Panc1 (cell line): ENCODE measurements at regions of chr3 and their contacts with region 1.

Region 1: GRCh38 chr3:57755668-57756527 is at the start of gene SLMAP:
- DNase-seq: peak; percentile 85
- ATAC-seq: peak; percentile 95
- H3K4me3 ChIP-seq: peak within 1 kb of the TSS; percentile 73 to 77
- H3K27ac ChIP-seq: peak within 1 kb of the TSS; percentile 95
- H3K4me1 ChIP-seq: peaks cover 14% of the 10 kb centered on the region
- H3K27me3 ChIP-seq: no peaks in the 10 kb centered on the region
- CTCF ChIP-seq: no peak
- total RNA-seq, gene SLMAP: 49.2 TPM

Region 2: GRCh38 chr3:57709559-57709958 is 46.3 kb before region 1 on chr3:
- CTCF ChIA-PET with region 1: no interaction called
- POLR2A ChIA-PET with region 1: interaction called, 14 read pairs
- in situ Hi-C with region 1: no loop called
- intact Hi-C with region 1: no loop called
- DNase-seq: no peak
- ATAC-seq: no peak
- H3K4me3 ChIP-seq: no peak overlapping the region
- H3K27ac ChIP-seq: no peak overlapping the region
- H3K4me1 ChIP-seq: no peaks in the 10 kb centered on the region
- H3K27me3 ChIP-seq: no peaks in the 10 kb centered on the region
- CTCF ChIP-seq: no peak